Aorta (tissue), 5 donors: ENCODE measurements at regions of chr6 and their contacts with region 1.

Region 1: GRCh38 chr6:151451950-151452749 is at the start of gene RMND1:
- DNase-seq: peak; percentile 100
- ATAC-seq: peak; percentile 100
- H3K4me3 ChIP-seq: peak within 1 kb of the TSS; percentile 86 to 96
- H3K27ac ChIP-seq: peak within 1 kb of the TSS; percentile 85 to 88
- H3K4me1 ChIP-seq: no peaks in the 10 kb centered on the region
- H3K27me3 ChIP-seq: no peaks in the 10 kb centered on the region
- total RNA-seq, gene RMND1: 23.8 to 24.4 TPM

Region 2: DNA sequence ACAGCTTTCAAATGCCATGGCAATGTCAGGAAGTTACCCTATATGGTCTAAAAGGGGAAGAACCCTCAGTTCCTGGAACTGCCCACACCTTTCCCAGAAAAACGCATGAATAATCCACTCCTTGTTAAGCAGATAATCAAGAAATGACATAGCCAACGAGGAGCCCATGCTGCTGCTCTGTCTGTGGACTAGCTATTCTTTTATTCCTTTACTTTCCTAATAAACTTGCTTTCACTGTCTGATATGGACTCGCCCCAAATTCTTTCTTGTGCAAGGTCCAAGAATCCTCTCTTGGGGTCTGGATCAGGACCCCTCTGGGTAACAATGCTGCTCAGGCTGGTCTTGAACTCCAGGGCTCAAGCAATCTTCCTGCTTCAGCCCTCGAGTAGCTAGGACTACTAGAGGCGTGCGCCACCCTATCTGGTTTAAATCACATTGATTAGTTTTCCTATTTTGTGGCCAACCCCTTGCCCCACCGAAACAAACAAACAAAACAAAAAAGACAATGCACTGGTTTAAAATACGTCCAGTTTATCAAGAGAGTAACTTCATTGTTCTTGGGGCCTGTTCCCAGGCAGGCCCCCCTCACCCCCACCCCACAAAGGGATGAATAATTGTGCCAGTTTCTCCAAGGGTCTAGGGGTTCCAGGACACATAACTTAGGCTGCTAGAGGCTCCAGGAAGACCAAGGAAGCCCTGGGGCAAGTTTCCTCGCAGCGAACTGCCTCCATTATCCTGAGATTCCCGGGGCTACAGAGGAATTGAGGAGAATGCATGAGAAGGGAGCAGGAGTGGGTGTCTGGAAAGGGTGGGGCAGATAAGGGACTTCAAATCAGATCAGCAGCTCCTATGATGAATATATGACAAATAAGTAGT is 222.5 kb before region 1 on chr6:
- intact Hi-C with region 1: no loop called
- DNase-seq: no peak
- ATAC-seq: no peak
- H3K4me3 ChIP-seq: no peak overlapping the region
- H3K27ac ChIP-seq: no peak overlapping the region
- H3K4me1 ChIP-seq: no peaks in the 10 kb centered on the region
- H3K27me3 ChIP-seq: no peaks in the 10 kb centered on the region

Region 3: DNA sequence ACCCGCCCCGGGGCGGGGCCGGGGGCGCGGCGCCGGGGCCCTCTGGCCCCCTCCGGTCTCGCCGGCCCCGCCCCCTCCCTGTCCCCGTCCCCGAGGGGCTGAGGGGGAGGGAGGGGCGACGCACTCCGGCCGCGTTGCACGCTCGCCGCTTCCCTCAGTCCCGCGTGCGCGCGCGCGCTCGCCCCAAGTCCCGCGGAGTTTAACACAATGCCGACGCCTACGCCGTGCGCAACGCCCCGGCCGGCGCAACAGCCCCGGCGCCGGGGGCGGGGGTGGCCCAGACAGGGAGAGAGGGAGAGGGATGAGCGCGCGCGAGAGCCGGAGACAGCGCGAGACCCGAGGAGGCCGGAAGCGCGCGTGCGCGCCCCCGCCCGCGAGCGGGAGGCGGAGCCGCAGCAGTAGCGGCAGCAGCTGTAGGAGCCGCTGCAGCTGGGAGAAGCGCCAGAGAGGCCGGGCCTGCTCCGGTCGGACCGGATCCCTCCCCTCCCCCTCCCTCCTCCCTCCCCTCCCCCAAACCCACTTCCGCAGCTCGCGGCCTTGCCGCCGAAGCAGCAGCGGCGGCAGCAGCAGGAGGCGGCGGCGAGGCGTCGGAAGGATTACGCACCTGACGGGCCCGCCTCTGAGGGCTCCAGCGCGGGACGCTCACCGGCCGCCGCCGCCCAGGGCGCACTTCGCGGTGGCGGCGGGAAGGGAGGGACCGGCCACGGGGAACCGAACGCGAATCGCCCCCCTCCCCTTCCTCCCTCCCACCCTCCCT is 61.7 kb before region 1 on chr6:
- intact Hi-C with region 1: loop called in 1 of 2 experiments (anchors 2 kb)
- DNase-seq: peak; percentile 99
- ATAC-seq: peak; percentile 97
- H3K4me3 ChIP-seq: peak overlapping the region; percentile 95 to 99
- H3K27ac ChIP-seq: peak overlapping the region; percentile 77 to 94
- H3K4me1 ChIP-seq: peaks cover 2 to 15% of the 10 kb centered on the region in 2 donors
- H3K27me3 ChIP-seq: no peaks in the 10 kb centered on the region